Naive thymus-derived CD4-positive, alpha-beta T cell (primary cell): ENCODE measurements at regions of chr12 and their contacts with region 1.

Region 1: DNA sequence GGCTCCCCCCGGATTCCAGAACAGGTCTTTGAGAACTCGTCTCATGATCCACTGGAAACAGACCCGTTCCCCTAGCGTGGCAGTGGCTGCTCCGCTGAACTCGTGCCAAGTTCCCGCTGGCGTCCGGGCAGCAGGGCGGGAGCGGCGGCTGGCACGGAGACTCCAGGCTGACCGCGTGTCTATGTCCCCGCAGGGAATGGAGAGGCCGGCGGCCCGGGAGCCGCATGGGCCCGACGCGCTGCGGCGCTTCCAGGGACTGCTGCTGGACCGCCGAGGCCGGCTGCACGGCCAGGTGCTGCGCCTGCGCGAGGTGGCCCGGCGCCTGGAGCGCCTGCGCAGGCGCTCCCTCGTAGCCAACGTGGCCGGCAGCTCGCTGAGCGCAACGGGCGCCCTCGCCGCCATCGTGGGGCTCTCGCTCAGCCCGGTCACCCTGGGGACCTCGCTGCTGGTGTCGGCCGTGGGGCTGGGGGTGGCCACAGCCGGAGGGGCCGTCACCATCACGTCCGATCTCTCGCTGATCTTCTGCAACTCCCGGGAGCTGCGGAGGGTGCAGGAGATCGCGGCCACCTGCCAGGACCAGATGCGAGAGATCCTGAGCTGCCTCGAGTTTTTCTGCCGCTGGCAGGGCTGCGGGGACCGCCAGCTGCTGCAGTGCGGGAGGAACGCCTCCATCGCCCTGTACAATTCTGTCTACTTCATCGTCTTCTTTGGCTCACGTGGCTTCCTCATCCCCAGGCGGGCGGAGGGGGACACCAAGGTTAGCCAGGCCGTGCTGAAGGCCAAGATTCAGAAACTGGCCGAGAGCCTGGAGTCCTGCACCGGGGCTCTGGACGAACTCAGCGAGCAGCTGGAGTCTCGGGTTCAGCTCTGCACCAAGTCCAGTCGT is 1.5 kb downstream of the APOLD1 start:
- DNase-seq: peak; percentile 62 to 78 (median 72)
- ATAC-seq: peak; percentile 92
- H3K4me3 ChIP-seq: peak overlapping the region; percentile 86
- H3K4me3 Mint-ChIP-seq: peak overlapping the region; percentile 76 to 89 (median 85)
- H3K27ac ChIP-seq: peak overlapping the region; percentile 78
- H3K27ac Mint-ChIP-seq: peak overlapping the region; percentile 62 to 96 (median 88)
- H3K4me1 ChIP-seq: peaks cover 6 to 9% of the 10 kb centered on the region in 2 donors
- H3K4me1 Mint-ChIP-seq: peaks cover 6 to 35% (median 17%) of the 10 kb centered on the region in 7 donors
- H3K27me3 ChIP-seq: no peaks in the 10 kb centered on the region
- H3K27me3 Mint-ChIP-seq: no peaks in the 10 kb centered on the region

Region 2: GRCh38 chr12:12724661-12725545 is 62.1 kb before region 1 on chr12:
- CTCF ChIA-PET with region 1: no interaction called
- POLR2A ChIA-PET with region 1: interaction called, 4 read pairs
- intact Hi-C with region 1: loop called (anchors 2 kb)
- DNase-seq: peak; percentile 78 to 97 (median 92)
- ATAC-seq: peak; percentile 77
- H3K4me3 ChIP-seq: peak overlapping the region; percentile 53
- H3K4me3 Mint-ChIP-seq: peak overlapping the region; percentile 87 to 98 (median 94)
- H3K27ac ChIP-seq: peak overlapping the region; percentile 99
- H3K27ac Mint-ChIP-seq: peak overlapping the region; percentile 96 to 99 (median 97)
- H3K4me1 ChIP-seq: peaks cover 28% of the 10 kb centered on the region in 2 donors
- H3K4me1 Mint-ChIP-seq: peaks cover 23 to 64% (median 56%) of the 10 kb centered on the region in 7 donors
- H3K27me3 ChIP-seq: no peaks in the 10 kb centered on the region
- H3K27me3 Mint-ChIP-seq: peaks cover 0 to 7% (median 0%) of the 10 kb centered on the region in 5 donors

Region 3: GRCh38 chr12:12813120-12814101 is 26.5 kb after region 1 on chr12 and contains the start of gene DDX47:
- CTCF ChIA-PET with region 1: interaction called, 84 read pairs
- POLR2A ChIA-PET with region 1: interaction called, 99 read pairs
- intact Hi-C with region 1: loop called (anchors 1 kb)
- DNase-seq: peak; percentile 91 to 99 (median 96)
- ATAC-seq: peak; percentile 97
- H3K4me3 ChIP-seq: peak within 1 kb of the TSS; percentile 96
- H3K4me3 Mint-ChIP-seq: peak within 1 kb of the TSS; percentile 89 to 99 (median 96)
- H3K27ac ChIP-seq: peak within 1 kb of the TSS; percentile 99
- H3K27ac Mint-ChIP-seq: peak within 1 kb of the TSS; percentile 84 to 99 (median 97)
- H3K4me1 ChIP-seq: peaks cover 28 to 41% of the 10 kb centered on the region in 2 donors
- H3K4me1 Mint-ChIP-seq: peaks cover 36 to 84% (median 69%) of the 10 kb centered on the region in 7 donors
- H3K27me3 ChIP-seq: no peaks in the 10 kb centered on the region
- H3K27me3 Mint-ChIP-seq: no peaks in the 10 kb centered on the region
- total RNA-seq, gene DDX47: 71.6 to 154 (median 75.5) TPM

Region 4: DNA sequence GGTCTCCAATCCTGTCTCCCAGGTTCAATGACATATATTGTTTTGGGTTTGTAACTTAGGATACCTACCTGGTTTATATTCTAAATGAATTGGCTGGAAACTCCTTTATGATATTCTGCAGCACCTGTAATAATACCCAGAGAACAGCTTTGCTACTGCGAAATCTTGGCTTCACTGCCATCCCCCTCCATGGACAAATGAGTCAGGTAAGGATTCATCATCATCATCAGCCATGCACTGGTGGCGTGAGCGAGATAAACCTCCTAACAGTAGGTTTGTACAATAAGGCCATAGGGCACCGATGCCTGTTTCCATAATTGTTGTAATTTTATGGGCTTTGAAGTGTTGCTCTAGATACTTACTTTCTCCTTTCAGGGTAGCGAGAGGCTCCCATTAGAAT is 36.9 kb after region 1 on chr12:
- CTCF ChIA-PET with region 1: no interaction called
- POLR2A ChIA-PET with region 1: no interaction called
- intact Hi-C with region 1: no loop called
- DNase-seq: no peak
- ATAC-seq: no peak
- H3K4me3 ChIP-seq: no peak overlapping the region
- H3K4me3 Mint-ChIP-seq: no peak overlapping the region
- H3K27ac ChIP-seq: no peak overlapping the region
- H3K27ac Mint-ChIP-seq: peak overlapping the region in 1 of 9 donors; percentile 62
- H3K4me1 ChIP-seq: no peaks in the 10 kb centered on the region
- H3K4me1 Mint-ChIP-seq: peaks cover 6 to 21% (median 20%) of the 10 kb centered on the region in 7 donors
- H3K27me3 ChIP-seq: no peaks in the 10 kb centered on the region
- H3K27me3 Mint-ChIP-seq: no peaks in the 10 kb centered on the region

Region 5: DNA sequence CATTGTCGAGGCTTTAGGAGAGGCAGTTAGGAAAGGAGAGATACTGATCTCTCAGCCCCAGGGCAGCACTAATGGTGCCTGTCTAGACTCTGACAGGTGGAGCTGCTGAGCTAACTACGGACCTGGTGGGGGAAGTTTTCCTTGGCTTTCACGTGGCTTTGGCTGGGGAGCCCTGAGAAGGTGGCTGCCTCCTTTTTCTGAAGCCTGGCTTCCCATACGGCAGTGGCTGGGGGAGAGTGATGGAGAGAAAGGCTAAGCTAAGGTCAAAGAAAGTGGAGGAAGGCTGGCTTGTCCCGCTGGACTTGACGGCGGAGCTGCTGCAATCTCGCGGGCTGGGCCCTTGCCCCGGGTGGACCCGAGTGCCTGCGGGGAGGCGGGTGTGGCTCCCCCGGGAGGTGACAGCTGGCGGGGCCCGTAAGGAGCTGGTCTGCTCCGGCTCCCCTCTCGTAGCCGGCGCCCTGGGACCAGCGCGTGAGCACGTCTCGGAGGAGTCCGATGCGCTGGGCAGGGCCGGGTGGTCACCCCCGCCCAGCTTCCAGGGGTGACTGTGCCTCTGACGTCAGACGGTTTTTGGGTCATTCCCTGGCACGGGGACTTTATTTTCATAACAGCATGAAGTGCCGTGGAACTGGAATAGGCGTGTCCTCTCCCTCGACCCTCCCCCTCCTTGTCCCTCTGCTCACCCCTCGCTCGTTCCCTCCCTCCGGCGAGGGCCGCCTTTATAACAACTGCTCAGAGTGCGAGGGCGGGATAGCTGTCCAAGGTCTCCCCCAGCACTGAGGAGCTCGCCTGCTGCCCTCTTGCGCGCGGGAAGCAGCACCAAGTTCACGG is 104.1 kb after region 1 on chr12 and contains the start of gene GPRC5A:
- CTCF ChIA-PET with region 1: interaction called, 13 read pairs
- POLR2A ChIA-PET with region 1: interaction called, 7 read pairs
- intact Hi-C with region 1: loop called (anchors 1 kb)
- DNase-seq: peak in 8 of 9 donors; percentile 19 to 50 (median 34)
- ATAC-seq: peak; percentile 73
- H3K4me3 ChIP-seq: peak within 1 kb of the TSS; percentile 65
- H3K4me3 Mint-ChIP-seq: peak within 1 kb of the TSS; percentile 82 to 94 (median 90)
- H3K27ac ChIP-seq: no peak within 1 kb of the TSS
- H3K27ac Mint-ChIP-seq: peak within 1 kb of the TSS in 7 of 9 donors; percentile 34 to 84 (median 72)
- H3K4me1 ChIP-seq: peaks cover 0 to 3% of the 10 kb centered on the region in 2 donors
- H3K4me1 Mint-ChIP-seq: peaks cover 0 to 10% (median 6%) of the 10 kb centered on the region in 7 donors
- H3K27me3 ChIP-seq: peaks cover 0 to 4% of the 10 kb centered on the region in 2 donors
- H3K27me3 Mint-ChIP-seq: peaks cover 6 to 62% (median 14%) of the 10 kb centered on the region in 5 donors
- total RNA-seq, gene GPRC5A: 0.05 to 0.93 (median 0.15) TPM in 4 of 5 experiments, not detected in the other

Region 6: DNA sequence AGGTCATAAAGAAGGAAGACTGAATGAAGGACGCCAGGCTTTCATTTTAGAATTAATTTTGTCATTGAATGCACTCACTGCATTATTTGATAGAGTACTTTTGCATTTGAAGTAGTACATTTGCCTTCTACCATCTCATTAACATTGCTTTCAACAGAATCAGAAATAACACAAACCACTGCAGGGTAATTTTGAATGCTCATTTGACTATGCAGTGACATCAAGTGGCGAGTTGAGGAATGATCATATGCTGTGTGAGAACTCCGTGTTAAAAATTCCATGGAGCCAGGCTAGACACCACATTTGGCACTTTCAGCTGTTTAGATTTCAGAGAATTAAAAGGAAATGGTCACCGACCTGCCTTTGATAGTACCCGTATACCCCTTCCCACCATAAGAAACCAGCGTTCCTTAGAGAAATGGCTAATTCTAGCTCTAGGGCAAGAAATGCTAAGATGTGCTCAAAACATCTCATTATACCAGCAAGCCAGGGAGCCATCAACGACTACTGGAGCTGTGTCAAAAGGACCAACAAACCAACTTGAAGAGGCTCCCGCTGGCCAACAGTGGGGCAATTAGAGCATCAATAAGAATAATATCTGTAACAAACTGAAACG is 196.6 kb after region 1 on chr12:
- CTCF ChIA-PET with region 1: interaction called, 9 read pairs
- POLR2A ChIA-PET with region 1: no interaction called
- intact Hi-C with region 1: loop called (anchors 1 to 2 kb)
- DNase-seq: peak in 5 of 9 donors; percentile 4 to 43 (median 19)
- ATAC-seq: peak; percentile 57
- H3K4me3 ChIP-seq: no peak overlapping the region
- H3K4me3 Mint-ChIP-seq: no peak overlapping the region
- H3K27ac ChIP-seq: no peak overlapping the region
- H3K27ac Mint-ChIP-seq: no peak overlapping the region
- H3K4me1 ChIP-seq: no peaks in the 10 kb centered on the region
- H3K4me1 Mint-ChIP-seq: no peaks in the 10 kb centered on the region
- H3K27me3 ChIP-seq: no peaks in the 10 kb centered on the region
- H3K27me3 Mint-ChIP-seq: no peaks in the 10 kb centered on the region

Region 7: GRCh38 chr12:13211859-13212664 is 425.1 kb after region 1 on chr12:
- CTCF ChIA-PET with region 1: interaction called, 9 read pairs
- POLR2A ChIA-PET with region 1: no interaction called
- intact Hi-C with region 1: loop called (anchors 1 kb)
- DNase-seq: peak; percentile 29 to 81 (median 73)
- ATAC-seq: peak; percentile 87
- H3K4me3 ChIP-seq: no peak overlapping the region
- H3K4me3 Mint-ChIP-seq: peak overlapping the region in 1 of 10 donors; percentile 55
- H3K27ac ChIP-seq: no peak overlapping the region
- H3K27ac Mint-ChIP-seq: peak overlapping the region in 3 of 9 donors; percentile 19 to 76 (median 70)
- H3K4me1 ChIP-seq: no peaks in the 10 kb centered on the region
- H3K4me1 Mint-ChIP-seq: peaks cover 5 to 29% (median 7%) of the 10 kb centered on the region in 7 donors
- H3K27me3 ChIP-seq: no peaks in the 10 kb centered on the region
- H3K27me3 Mint-ChIP-seq: peaks cover 0 to 13% (median 0%) of the 10 kb centered on the region in 5 donors

Region 8: DNA sequence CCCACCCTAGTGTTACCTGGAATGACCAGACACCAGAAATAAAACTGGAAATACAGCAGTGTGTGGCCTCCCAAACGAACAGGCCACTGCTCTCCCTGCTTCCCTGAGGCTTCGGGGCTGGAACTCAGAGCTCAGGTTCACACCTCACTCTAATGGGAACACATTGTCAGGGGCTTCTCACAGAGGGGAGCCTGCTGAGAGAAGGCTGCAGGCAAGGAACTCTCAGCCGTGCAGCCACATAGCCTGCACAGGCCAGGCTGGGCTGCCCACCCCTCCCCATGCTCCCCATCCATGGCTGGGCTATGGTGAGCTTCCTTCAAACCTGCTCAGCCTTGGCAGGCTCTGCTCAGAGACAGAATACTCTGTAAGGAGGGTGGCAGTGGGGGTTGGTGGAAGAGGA is 712.0 kb after region 1 on chr12:
- CTCF ChIA-PET with region 1: no interaction called
- POLR2A ChIA-PET with region 1: no interaction called
- intact Hi-C with region 1: no loop called
- DNase-seq: no peak
- ATAC-seq: no peak
- H3K4me3 ChIP-seq: no peak overlapping the region
- H3K4me3 Mint-ChIP-seq: no peak overlapping the region
- H3K27ac ChIP-seq: no peak overlapping the region
- H3K27ac Mint-ChIP-seq: no peak overlapping the region
- H3K4me1 ChIP-seq: no peaks in the 10 kb centered on the region
- H3K4me1 Mint-ChIP-seq: no peaks in the 10 kb centered on the region
- H3K27me3 ChIP-seq: no peaks in the 10 kb centered on the region
- H3K27me3 Mint-ChIP-seq: peaks cover 0 to 25% (median 11%) of the 10 kb centered on the region in 5 donors